Heart right ventricle (tissue), 16 donors: ENCODE measurements at regions of chr18 and their contacts with region 1.

Region 1: DNA sequence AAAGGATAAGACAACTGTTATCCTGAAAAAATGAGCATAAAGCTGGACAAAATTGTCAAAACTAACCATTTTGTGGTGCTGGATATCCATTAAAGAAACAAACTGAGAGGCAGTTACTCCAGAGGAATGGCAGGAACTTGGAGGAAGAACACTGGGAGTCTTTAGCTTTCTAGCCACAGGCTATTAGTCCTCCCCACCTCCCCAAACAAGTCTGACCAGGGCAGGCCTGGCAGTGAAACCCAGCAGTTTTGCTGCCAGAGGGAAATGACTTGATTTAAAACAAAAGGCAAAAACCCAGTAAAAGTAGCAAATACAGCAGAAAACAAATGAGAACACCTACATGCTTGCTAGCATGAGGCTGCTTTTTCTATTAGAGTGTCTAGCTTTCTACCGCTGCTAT is 34.9 kb downstream of the OSBPL1A start:
- DNase-seq: no peak
- ATAC-seq: no peak
- H3K4me3 ChIP-seq: no peak overlapping the region
- H3K27ac ChIP-seq: no peak overlapping the region
- H3K4me1 ChIP-seq: peaks cover 0 to 5% (median 0%) of the 10 kb centered on the region in 9 donors
- H3K27me3 ChIP-seq: no peaks in the 10 kb centered on the region
- CTCF ChIP-seq: no peak

Region 2: DNA sequence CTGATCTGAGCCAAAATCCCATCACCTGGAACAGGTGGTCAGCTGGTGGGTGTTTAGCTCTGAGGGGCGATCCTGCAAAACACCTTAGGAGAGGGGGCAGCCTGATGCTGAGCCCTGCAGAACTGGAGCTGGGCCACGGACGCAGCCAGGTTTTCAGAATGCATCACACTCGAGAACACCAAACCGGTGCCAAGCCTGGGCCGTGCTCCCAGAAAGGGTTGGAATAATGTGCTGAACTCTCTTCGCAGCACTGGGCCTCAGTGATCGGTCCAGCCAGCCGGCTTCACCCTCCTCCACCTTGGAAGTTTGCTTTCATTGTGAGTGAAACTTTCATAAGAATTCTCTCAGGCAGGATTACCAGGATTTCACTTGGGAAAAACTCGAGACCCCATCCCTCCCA is 404.7 kb before region 1 on chr18:
- intact Hi-C with region 1: no loop called
- DNase-seq: peak; percentile 74 to 78
- ATAC-seq: peak; percentile 86 to 98 (median 94)
- H3K4me3 ChIP-seq: no peak overlapping the region
- H3K27ac ChIP-seq: peak overlapping the region in 2 of 10 donors; percentile 32 to 36
- H3K4me1 ChIP-seq: peaks cover 0 to 3% (median 0%) of the 10 kb centered on the region in 9 donors
- H3K27me3 ChIP-seq: no peaks in the 10 kb centered on the region
- CTCF ChIP-seq: no peak

Region 3: DNA sequence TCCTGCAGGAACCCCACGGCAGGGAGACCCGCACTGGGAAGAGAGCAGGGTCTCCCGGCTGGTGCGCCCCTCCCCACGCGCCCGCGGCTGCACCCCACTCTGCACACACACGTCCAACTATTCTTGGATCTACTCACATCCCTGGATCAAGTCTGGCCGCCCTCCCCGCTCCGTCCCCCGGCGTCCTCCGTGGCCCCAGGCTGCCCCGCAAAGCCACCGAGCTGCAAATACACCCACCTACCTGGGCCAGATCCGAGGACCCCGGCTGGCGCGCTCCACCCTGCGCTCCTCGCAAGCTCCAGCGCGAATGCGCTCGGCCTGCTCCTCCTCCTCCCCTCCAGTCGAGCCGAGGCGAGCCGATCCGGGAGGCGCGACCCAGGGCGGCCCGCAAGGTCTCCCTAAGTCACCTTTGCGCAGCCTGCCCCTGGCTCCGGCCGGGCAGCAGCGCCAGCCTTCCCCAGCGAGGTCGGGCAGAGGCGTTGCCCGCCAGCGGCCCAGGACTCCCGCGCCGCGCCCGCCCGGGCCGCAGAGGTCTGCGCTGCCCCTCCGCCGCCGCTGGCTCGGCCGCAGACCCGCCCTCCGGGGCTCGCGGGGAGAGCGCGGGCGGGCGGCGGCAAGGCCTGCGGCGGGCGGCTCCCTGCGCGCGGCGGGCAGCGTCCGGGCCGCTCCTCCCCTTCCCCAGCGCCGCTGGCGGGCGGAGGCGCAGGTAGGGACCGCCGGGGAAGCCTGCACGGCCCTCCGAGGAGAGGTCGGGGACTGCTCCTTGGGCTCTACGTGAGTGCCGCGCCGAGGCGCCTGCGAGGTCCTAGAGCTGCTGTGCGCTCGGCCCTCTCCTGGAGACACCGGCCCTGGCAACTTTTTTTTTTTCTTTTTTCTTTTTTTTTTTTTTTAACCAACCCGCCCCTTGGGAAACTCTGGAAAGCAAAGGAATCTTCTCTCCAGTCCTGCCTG is 91.1 kb before region 1 on chr18:
- intact Hi-C with region 1: no loop called
- DNase-seq: peak; percentile 71 to 79
- ATAC-seq: peak; percentile 84 to 92 (median 88)
- H3K4me3 ChIP-seq: peak overlapping the region; percentile 76 to 94 (median 84)
- H3K27ac ChIP-seq: peak overlapping the region; percentile 89 to 97 (median 94)
- H3K4me1 ChIP-seq: peaks cover 0 to 59% (median 38%) of the 10 kb centered on the region in 9 donors
- H3K27me3 ChIP-seq: peaks cover 0 to 4% (median 0%) of the 10 kb centered on the region in 7 donors
- CTCF ChIP-seq: peak in 6 of 9 donors; percentile 11 to 49 (median 31)

Region 4: DNA sequence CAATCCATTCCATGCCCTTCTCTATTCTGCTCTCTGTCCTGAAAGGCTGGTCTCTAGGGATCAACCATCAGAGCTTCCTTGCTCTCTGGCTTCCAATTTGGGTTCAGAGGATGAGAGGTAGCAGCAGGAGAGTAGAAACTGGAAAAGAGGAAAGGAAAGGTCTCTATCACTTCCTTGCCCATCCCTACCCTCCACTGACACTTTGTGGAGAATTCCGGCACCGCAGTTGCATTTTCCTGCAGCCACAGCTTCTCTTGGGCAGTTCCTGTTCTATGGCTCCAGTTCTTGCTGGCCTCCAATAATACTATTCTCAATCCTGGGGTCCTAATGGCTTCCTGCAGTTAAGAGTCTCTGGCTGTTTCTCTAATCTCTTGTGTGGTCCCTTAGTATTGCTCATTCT is 50.4 kb after region 1 on chr18:
- intact Hi-C with region 1: loop called in 4 of 10 experiments (anchors 2 to 5 kb)
- DNase-seq: peak in 1 of 2 donors; percentile 15
- ATAC-seq: peak in 1 of 8 donors; percentile 38
- H3K4me3 ChIP-seq: no peak overlapping the region
- H3K27ac ChIP-seq: no peak overlapping the region
- H3K4me1 ChIP-seq: no peaks in the 10 kb centered on the region
- H3K27me3 ChIP-seq: peaks cover 0 to 30% (median 19%) of the 10 kb centered on the region in 7 donors
- CTCF ChIP-seq: peak in 8 of 9 donors; percentile 23 to 47 (median 36)

Region 5: DNA sequence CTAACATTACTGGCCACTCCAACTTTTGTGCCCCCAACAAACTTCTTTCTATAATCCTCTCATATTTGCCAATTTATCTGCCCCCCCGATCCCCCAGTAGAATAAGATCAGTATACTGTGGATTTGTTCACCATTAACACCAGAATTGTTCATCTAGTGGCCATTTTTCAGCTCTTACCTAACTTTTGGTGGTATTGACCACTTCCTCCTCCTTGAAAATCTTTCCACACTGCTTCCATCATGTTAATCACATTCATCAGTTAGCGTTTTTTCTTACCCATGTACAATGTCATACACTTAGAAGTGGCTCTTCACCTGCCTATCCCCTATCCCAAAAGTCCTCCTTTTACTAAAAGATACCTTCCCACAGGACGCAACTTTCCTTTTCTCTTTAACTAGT is 69.9 kb after region 1 on chr18:
- intact Hi-C with region 1: no loop called
- DNase-seq: no peak
- ATAC-seq: no peak
- H3K4me3 ChIP-seq: no peak overlapping the region
- H3K27ac ChIP-seq: no peak overlapping the region
- H3K4me1 ChIP-seq: peaks cover 0 to 14% (median 5%) of the 10 kb centered on the region in 9 donors
- H3K27me3 ChIP-seq: no peaks in the 10 kb centered on the region
- CTCF ChIP-seq: no peak

Region 6: GRCh38 chr18:24446953-24447538 is 84.3 kb after region 1 on chr18:
- intact Hi-C with region 1: no loop called
- DNase-seq: no peak
- ATAC-seq: no peak
- H3K4me3 ChIP-seq: no peak overlapping the region
- H3K27ac ChIP-seq: no peak overlapping the region
- H3K4me1 ChIP-seq: no peaks in the 10 kb centered on the region
- H3K27me3 ChIP-seq: no peaks in the 10 kb centered on the region
- CTCF ChIP-seq: peak in 4 of 9 donors; percentile 6 to 27 (median 14)